Sigmoid colon (tissue), 7 donors: ENCODE measurements at regions of chr15 and their contacts with region 1.

Region 1: DNA sequence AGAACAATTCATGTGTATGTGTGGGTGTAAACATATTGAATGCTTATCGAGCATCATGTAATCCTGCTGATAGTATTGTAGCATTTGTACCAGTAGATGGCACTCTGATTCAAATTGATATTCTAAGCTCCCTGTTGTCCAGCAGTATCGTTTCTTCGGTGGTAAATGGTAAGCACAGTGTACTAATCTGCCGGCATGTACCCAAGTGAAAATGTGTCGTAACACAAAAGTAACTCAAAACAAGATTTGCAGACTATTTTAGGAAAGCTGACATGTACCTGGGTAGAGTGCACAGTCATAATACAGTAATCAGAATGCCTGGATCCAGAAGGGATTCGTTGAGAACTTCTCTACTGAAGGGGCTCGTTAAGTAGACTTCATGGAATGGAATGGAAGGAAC is 31.7 kb upstream of the MNS1 start:
- DNase-seq: no peak
- H3K4me3 ChIP-seq: no peak overlapping the region
- H3K27ac ChIP-seq: no peak overlapping the region
- H3K4me1 ChIP-seq: no peaks in the 10 kb centered on the region
- H3K27me3 ChIP-seq: no peaks in the 10 kb centered on the region
- CTCF ChIP-seq: peak; percentile 49 to 56 (median 52)
- EP300 ChIP-seq: no peak
- POLR2A ChIP-seq: no peak

Region 2: GRCh38 chr15:56869573-56869972 is 372.9 kb after region 1 on chr15:
- intact Hi-C with region 1: loop called (anchors 5 kb)
- DNase-seq: peak; percentile 72
- H3K4me3 ChIP-seq: no peak overlapping the region
- H3K27ac ChIP-seq: no peak overlapping the region
- H3K4me1 ChIP-seq: peaks cover 0 to 21% (median 16%) of the 10 kb centered on the region in 4 donors
- H3K27me3 ChIP-seq: no peaks in the 10 kb centered on the region
- CTCF ChIP-seq: peak; percentile 18 to 51 (median 32)
- EP300 ChIP-seq: no peak
- POLR2A ChIP-seq: no peak

Region 3: DNA sequence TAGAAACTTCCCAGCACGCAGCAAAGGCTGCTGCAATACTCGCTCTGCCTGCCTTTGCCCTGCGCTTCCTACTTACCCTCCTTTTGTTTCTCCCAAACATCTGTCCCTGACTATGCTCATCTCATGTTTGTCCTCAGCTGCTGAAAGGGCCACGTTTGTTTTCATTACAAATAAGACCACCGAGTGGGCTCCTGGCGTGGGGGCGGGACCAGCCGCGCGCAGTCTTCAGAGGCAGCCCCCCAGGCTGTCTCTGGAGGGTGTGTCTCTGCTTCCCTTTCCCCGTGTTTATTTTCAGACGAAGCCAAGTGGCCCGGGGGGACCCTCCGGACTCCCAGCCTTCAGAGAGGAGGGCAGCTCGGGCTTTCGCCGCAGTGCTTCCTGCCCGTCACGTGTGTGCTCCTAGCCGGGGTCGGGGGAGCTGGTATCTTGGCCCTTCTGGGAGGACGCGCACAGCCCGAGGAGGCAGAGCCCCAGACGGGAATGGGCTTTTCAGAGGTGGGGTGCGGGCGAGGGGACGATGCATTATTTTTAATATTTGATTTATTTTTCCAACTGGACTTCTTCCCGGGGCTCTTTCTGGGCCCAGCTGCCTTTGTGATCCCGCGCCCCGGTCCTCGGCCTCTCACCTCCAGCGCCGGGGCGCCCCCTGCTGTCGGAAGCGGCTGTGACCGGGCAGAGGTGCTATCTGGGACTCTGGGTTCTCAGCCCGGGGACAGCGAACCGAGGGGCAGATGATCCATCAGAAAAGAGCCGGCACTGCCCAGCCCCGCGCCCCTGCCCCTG is 809.7 kb after region 1 on chr15:
- intact Hi-C with region 1: loop called (anchors 1 kb)
- DNase-seq: peak; percentile 89
- H3K4me3 ChIP-seq: peak overlapping the region; percentile 30 to 58 (median 51)
- H3K27ac ChIP-seq: peak overlapping the region in 2 of 4 donors; percentile 12 to 27
- H3K4me1 ChIP-seq: peaks cover 0 to 16% (median 14%) of the 10 kb centered on the region in 4 donors
- H3K27me3 ChIP-seq: no peaks in the 10 kb centered on the region
- CTCF ChIP-seq: peak; percentile 68 to 86 (median 78)
- EP300 ChIP-seq: no peak
- POLR2A ChIP-seq: no peak